ENCODE measurements at regions of chr17 and their contacts with region 1.

Region 1: GRCh38 chr17:54992797-54993639 is 24.5 kb downstream of the STXBP4 start:
- DNase-seq: no peak
- ATAC-seq: peak; percentile 77
- H3K4me3 ChIP-seq: no peak overlapping the region
- H3K27ac ChIP-seq: no peak overlapping the region
- H3K4me1 ChIP-seq: no peaks in the 10 kb centered on the region
- H3K27me3 ChIP-seq: no peaks in the 10 kb centered on the region
- CTCF ChIP-seq: peak; percentile 79

Region 2: DNA sequence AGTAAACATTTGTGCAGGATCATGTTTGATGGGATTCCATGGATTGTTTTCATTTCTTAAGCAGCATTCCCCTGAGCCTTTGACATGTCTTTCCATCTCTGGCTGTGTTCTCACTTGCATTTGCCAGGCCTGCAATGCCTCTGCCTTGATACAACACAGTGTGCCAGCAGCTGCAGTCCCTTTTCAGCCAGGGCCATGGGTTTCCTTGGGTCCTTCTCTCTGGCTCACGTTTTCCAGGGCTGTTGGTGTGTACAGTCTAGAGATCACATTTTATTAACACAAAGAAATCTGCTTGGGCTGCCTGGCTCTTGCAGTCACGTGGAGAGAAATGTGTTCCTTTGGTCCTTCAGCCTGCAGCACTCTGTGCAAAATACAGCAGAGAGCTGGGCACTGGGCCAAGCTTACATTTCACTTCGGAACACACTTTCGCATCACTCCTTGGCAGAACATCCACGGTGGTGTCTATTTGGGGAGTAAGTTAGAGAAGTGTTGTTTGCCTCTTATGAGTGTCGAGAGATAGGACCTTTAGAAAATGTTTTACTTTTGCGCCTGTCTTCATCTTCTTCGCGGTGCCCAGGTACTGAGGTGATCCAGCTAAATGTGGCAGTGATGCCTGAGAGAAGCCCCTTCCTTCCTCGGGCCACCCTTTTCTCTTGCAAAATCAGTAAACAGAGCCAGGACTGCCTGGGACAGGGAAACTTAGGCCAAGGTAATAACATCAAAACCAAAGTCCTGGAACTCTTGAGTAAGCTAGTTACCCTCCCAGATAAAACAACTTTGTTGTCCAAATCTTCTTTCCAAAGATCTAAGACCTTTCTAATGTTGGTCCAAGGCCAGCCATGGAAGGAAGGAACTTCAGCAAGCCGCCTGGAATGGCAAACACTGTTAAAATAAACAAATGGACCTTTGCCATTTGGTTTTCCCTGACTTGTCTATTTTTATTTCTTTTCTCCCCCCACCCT is 292.6 kb after region 1 on chr17:
- CTCF ChIA-PET with region 1: interaction called, 10 read pairs
- POLR2A ChIA-PET with region 1: no interaction called
- in situ Hi-C with region 1: no loop called
- intact Hi-C with region 1: no loop called
- DNase-seq: no peak
- ATAC-seq: no peak
- H3K4me3 ChIP-seq: no peak overlapping the region
- H3K27ac ChIP-seq: no peak overlapping the region
- H3K4me1 ChIP-seq: no peaks in the 10 kb centered on the region
- H3K27me3 ChIP-seq: no peaks in the 10 kb centered on the region
- CTCF ChIP-seq: no peak

Region 3: GRCh38 chr17:55295411-55296170 is 302.6 kb after region 1 on chr17:
- CTCF ChIA-PET with region 1: interaction called, 5 read pairs
- POLR2A ChIA-PET with region 1: no interaction called
- in situ Hi-C with region 1: no loop called
- intact Hi-C with region 1: loop called (anchors 2 kb)
- DNase-seq: peak; percentile 45
- ATAC-seq: peak; percentile 91
- H3K4me3 ChIP-seq: no peak overlapping the region
- H3K27ac ChIP-seq: no peak overlapping the region
- H3K4me1 ChIP-seq: no peaks in the 10 kb centered on the region
- H3K27me3 ChIP-seq: peaks cover 6% of the 10 kb centered on the region
- CTCF ChIP-seq: peak; percentile 89

Region 4: DNA sequence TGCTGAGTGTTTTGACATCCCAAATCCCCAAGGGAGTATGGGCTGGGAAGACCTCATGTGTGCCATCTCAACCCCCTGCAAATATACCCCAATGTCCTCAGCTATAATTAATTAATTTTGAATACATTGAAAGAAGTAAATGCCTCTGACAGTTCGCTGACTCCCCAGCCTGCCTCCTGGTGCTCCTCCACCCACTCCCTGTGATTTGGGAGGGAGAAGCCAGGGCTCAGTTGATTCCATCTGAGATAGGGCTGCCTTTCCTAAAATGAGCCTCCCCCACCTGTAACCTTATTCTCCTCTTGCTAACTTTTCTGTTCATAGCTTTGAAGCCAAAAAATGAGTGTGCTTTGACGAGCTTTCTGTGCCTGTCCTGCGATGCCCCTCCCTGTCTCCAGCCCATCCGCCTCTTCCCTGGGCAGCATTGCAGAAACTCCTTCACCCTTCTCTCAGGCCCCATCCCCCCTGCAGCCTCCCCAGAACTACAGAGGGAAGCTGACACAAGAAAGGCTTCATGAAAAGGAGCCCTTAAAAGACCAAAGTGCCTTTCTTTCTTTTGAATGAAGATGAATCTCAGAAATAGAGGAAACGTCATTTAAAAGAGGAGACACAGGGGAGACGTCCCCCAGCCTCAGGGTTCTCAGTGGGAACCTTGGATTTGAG is 342.0 kb after region 1 on chr17:
- CTCF ChIA-PET with region 1: interaction called, 14 read pairs
- POLR2A ChIA-PET with region 1: no interaction called
- in situ Hi-C with region 1: no loop called
- intact Hi-C with region 1: no loop called
- DNase-seq: no peak
- ATAC-seq: no peak
- H3K4me3 ChIP-seq: no peak overlapping the region
- H3K27ac ChIP-seq: no peak overlapping the region
- H3K4me1 ChIP-seq: no peaks in the 10 kb centered on the region
- H3K27me3 ChIP-seq: peaks cover under 1% of the 10 kb centered on the region; the same call in 1 of the 2 replicates
- CTCF ChIP-seq: no peak

Region 5: GRCh38 chr17:55342586-55343585 is 349.9 kb after region 1 on chr17:
- CTCF ChIA-PET with region 1: no interaction called
- POLR2A ChIA-PET with region 1: interaction called, 14 read pairs
- in situ Hi-C with region 1: no loop called
- intact Hi-C with region 1: loop called (anchors 2 kb)
- DNase-seq: no peak
- ATAC-seq: no peak
- H3K4me3 ChIP-seq: no peak overlapping the region
- H3K27ac ChIP-seq: no peak overlapping the region
- H3K4me1 ChIP-seq: no peaks in the 10 kb centered on the region
- H3K27me3 ChIP-seq: peaks cover 6% of the 10 kb centered on the region; the same call in 1 of the 2 replicates
- CTCF ChIP-seq: no peak

Region 6: GRCh38 chr17:55348749-55349354 is 355.8 kb after region 1 on chr17:
- CTCF ChIA-PET with region 1: no interaction called
- POLR2A ChIA-PET with region 1: no interaction called
- in situ Hi-C with region 1: no loop called
- intact Hi-C with region 1: loop called (anchors 2 kb)
- DNase-seq: peak; percentile 32
- ATAC-seq: peak; percentile 80
- H3K4me3 ChIP-seq: no peak overlapping the region
- H3K27ac ChIP-seq: no peak overlapping the region
- H3K4me1 ChIP-seq: no peaks in the 10 kb centered on the region
- H3K27me3 ChIP-seq: no peaks in the 10 kb centered on the region
- CTCF ChIP-seq: peak; percentile 97

Region 7: DNA sequence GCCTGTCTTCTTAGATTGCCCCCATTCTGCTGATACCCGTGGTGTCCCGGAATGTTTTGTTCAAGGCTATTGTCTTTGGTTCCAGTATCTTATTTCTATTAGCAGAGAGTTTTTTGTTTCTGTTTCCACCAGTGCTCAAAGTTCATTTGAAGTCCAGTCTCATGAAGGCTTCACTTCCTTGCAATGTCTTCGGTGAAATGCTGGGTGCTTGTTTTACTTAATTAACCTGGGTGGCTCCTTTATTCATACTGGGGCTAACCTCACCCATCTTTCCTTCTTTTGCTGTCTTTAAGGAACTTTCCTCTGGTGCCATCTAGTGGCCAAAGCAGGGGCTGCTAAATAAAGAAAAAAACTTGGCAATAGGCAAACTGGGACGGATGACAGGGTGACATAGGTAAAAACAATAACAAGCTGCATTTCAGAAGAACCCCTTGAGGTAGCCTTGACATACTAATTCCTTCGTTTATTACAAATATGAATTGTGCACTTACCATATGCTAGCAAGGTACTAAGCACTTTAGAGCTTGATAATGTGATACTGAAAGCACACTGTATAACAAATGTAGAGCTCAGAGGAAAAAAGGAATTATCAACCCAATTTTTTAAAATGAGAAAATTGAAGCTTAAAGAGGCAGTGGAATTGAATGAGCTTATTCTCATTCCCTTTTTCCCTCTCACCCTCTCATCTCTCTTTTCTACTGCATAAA is 521.0 kb after region 1 on chr17:
- CTCF ChIA-PET with region 1: no interaction called
- POLR2A ChIA-PET with region 1: no interaction called
- in situ Hi-C with region 1: no loop called
- intact Hi-C with region 1: loop called (anchors 5 kb)
- DNase-seq: peak; percentile 58
- ATAC-seq: peak; percentile 87
- H3K4me3 ChIP-seq: no peak overlapping the region
- H3K27ac ChIP-seq: no peak overlapping the region
- H3K4me1 ChIP-seq: no peaks in the 10 kb centered on the region
- H3K27me3 ChIP-seq: peaks cover 17% of the 10 kb centered on the region
- CTCF ChIP-seq: peak; percentile 91

Measured in Panc1 (cell line).